Posterior cingulate gyrus (tissue), 11 donors: ENCODE measurements at regions of chr1 and their contacts with region 1.

Region 1: DNA sequence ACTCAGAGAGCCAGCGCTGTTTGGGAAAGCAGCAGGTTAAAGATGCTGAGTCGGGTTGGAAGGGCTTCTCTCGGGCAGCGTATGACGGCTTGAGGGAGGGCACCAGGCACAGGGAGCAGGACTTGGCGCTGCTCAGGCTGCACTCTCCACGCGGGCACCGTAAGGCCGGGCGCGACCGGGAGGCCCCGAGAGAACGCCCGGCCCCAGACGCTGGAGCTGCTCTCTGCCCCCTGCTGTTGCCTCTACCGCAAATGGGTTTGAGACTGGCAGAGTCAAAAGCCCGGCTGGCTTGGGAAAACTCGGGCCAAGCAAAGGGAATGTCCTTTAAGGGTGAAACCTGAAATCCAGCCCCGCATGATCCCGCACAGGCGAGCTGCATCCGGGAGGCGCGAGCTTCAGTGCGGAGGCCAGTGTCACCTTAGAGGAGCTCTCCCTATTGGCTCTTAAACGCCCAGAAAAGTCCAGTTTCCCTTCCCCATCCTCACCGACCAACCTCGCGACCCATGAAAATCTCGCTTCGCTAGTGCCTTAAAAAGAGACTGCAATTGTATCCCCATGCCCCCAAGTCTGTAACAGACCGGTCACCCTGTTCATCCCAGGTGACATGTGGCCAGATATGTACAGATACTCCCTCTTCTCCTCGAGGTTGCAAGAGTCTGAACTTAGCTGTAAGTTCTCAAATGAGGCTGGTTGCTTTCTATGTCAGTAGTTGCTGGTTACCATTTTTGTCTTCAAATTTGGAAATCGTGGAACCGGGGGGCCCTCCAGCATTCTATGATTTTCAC is 1.1 kb downstream of the PRRX1 start:
- DNase-seq: peak in 5 of 10 donors; percentile 18 to 86 (median 54)

Region 2: GRCh38 chr1:170531758-170532657 is 133.0 kb before region 1 on chr1 and contains the start of gene GORAB:
- intact Hi-C with region 1: loop called (anchors 5 kb)
- DNase-seq: peak; percentile 85 to 98 (median 94)

Region 3: DNA sequence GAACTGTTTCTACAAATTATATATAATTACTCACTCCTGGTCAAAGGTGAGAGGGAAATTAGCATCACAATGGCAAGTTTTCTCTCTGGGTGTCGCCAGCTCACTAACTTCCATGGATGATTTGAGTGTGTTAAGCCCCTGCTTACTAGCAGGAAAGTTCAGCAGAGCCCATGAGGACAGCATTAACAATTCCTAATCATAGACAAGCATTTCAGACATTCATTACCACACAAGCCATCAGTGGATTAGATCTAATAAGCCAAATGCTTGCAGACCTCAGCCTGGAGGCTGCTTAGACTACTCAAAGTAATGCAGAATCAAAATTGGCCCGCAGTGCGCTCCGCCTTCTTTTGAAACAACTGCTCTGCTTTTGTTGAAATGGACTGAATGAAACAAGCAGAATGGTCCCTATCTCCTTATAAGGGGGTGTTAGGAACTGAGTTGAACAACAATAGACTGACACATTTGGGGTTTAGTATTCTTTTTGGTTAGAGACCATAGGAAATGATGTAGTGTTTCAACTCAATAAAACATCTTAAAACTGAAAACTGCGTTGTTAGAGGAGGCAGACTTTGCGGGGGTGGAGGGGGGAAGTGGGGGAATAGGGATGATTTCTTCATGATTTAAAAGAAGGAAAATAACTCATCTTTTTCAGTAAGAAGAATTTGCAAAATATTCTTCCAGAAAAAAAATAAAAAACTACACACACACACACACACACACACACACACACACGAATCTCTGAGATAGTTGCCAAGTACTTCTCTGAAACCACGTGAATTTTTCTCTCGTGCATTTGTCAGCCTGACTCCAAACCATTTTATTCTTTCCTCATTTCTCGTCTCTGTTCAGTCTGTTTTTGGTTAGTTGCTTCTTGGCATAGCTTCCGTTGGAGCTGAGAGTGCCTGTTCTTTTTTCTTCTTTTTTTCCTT is 78.4 kb before region 1 on chr1:
- intact Hi-C with region 1: loop called (anchors 10 kb)
- DNase-seq: peak in 3 of 10 donors; percentile 12 to 84 (median 12)

Region 4: GRCh38 chr1:170707959-170708655 is 43.1 kb after region 1 on chr1:
- intact Hi-C with region 1: no loop called
- DNase-seq: no peak